ENCODE measurements at regions of chr10 and their contacts with region 1.

Region 1: GRCh38 chr10:120735773-120736371 is 115.3 kb upstream of the WDR11 start:
- DNase-seq: no peak
- H3K4me3 Mint-ChIP-seq: no peak overlapping the region
- H3K27ac Mint-ChIP-seq: no peak overlapping the region
- H3K4me1 Mint-ChIP-seq: no peaks in the 10 kb centered on the region
- H3K27me3 Mint-ChIP-seq: no peaks in the 10 kb centered on the region

Region 2: GRCh38 chr10:119981826-119982225 is 754.0 kb before region 1 on chr10:
- intact Hi-C with region 1: no loop called
- DNase-seq: no peak
- H3K4me3 Mint-ChIP-seq: no peak overlapping the region
- H3K27ac Mint-ChIP-seq: no peak overlapping the region
- H3K4me1 Mint-ChIP-seq: no peaks in the 10 kb centered on the region
- H3K27me3 Mint-ChIP-seq: peaks cover 3% of the 10 kb centered on the region

Region 3: DNA sequence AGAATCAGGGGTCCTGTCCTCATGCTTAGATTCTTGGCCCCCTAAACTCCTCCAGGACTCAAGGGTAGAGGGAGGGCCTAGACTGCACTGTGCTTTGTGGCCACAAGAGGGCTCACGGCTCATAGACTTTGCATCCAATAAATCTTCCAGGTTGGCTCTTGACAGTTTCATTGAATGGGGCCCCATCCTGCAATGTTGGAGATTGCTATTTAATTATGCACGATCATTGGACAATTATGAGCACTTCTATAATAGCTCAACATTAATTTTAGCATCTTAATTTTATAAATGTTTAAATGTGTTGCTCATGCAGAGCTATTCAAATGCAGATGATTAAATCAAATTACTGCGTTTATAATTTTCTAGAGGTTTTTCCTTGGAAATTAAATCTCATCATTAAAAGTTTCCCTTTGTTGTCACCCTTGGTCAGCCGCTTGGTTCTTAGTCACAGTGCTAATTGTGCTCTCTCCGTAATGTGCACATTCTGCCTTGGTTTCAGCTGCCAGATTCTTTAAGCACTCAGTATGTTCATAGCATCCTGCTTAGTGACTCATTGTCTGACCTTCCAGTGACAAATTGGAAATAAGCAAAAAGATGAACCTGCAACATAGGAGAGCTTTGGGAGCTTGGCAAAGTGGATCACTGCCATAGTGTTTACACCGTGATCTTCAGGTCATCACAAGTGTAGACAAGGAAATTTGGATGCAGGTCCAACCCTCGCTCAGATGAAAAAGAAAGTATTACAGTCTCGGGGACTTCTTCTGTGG is 312.3 kb before region 1 on chr10:
- intact Hi-C with region 1: loop called (anchors 2 kb)
- DNase-seq: no peak
- H3K4me3 Mint-ChIP-seq: no peak overlapping the region
- H3K27ac Mint-ChIP-seq: no peak overlapping the region
- H3K4me1 Mint-ChIP-seq: no peaks in the 10 kb centered on the region
- H3K27me3 Mint-ChIP-seq: no peaks in the 10 kb centered on the region